ENCODE measurements at regions of chr2 and their contacts with region 1.

Region 1: GRCh38 chr2:27409321-27410073 is at the start of gene PPM1G:
- DNase-seq: peak; percentile 97
- ATAC-seq: peak; percentile 97
- H3K4me3 Mint-ChIP-seq: peak within 1 kb of the TSS; percentile 79
- H3K27ac Mint-ChIP-seq: peak within 1 kb of the TSS; percentile 90
- H3K4me1 Mint-ChIP-seq: peaks cover 39% of the 10 kb centered on the region
- H3K27me3 Mint-ChIP-seq: peaks cover 4% of the 10 kb centered on the region
- total RNA-seq, gene PPM1G: 136 to 159 TPM

Region 2: DNA sequence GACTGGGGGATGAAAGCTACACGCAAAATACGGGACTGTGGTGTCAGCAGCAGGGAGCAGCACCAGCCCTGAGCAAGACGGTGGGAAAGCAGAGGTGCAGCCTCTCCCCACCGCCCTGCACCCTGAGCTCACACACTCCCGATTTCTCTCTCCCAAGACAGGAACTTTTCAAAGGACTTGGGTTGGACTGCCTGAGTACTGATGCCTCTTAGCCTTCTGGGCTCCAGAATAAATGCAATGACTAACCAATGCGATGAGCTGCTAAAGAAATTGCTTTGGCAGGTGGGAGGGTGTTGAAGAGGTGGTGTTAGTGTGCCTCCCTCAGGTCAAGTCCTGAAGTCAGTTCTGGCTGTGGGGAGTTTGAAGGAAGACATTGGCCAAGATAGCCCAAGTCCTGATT is 117.6 kb before region 1 on chr2:
- CTCF ChIA-PET with region 1: no interaction called
- DNase-seq: no peak
- ATAC-seq: no peak
- H3K4me3 Mint-ChIP-seq: no peak overlapping the region
- H3K27ac Mint-ChIP-seq: no peak overlapping the region
- H3K4me1 Mint-ChIP-seq: peaks cover 2% of the 10 kb centered on the region
- H3K27me3 Mint-ChIP-seq: peaks cover 54% of the 10 kb centered on the region

Region 3: DNA sequence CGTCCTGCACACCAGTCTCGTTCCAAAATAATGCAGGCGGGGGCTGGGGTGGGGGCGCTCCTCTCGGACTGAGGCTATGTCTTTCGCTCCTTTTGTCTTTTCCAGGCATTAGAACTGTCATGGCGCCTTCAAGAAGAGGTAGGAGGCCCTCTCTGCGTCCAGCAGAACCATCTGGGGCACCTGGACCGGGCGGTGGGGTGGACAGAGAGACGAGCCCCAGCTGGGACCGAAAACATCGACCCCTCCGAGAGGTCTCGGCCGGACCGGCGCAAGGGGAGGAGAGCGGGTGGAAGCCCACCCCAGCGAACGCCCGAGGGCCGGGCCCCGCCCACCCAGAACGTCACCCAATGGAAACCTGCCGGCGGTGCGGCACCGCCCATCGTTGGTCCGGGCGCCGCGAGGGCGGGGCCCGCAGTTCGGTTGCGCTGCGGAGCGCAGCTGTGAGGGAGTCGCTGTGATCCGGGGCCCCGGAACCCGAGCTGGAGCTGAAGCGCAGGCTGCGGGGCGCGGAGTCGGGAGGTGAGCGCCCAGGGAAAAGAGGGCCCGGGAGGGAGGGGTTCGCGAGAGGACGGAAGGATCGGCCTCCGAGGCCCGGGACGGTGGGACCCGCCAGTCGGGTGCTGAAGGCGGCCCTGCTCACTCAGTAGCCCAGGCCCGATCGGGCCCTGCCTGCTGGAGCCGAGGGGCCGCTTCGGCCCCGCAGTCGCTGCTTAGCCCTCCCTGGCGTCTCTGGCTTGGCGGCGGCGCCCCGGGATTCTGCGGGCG is 18.9 kb after region 1 on chr2 and contains the start of gene NRBP1:
- CTCF ChIA-PET with region 1: interaction called, 32 read pairs
- DNase-seq: peak; percentile 94
- ATAC-seq: peak; percentile 89
- H3K4me3 Mint-ChIP-seq: peak within 1 kb of the TSS; percentile 96
- H3K27ac Mint-ChIP-seq: peak within 1 kb of the TSS; percentile 97
- H3K4me1 Mint-ChIP-seq: peaks cover 31% of the 10 kb centered on the region
- H3K27me3 Mint-ChIP-seq: peaks cover 3% of the 10 kb centered on the region
- total RNA-seq, gene NRBP1: 88.5 to 103 TPM

Measured in activated CD8-positive, alpha-beta memory T cell treated with anti-CD3 and anti-CD28 coated beads, Interleukin-2, amount 10 ng/mL, durations not matched to agents 7 days and 5 days (primary cell).